IMR-90 (cell line): ENCODE measurements at regions of chr4 and their contacts with region 1.

Region 1: DNA sequence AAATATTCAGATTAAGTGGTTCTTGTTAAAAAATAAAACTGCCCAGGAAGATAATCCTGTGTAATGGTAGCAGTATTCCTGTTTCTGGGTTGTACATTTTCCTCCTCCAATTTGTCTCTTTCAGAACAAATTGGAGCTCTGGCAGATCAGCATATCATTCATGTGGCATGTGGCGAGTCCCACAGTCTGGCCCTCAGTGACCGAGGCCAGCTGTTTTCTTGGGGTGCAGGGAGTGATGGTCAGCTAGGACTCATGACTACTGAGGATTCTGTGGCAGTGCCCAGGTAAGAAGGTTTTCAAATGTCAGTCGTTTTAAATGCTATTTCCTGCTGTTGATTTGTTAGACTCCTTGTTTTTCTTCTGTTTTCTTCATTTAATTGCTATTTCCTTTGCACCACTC is 47.9 kb downstream of the NAP1L5 start:
- DNase-seq: no peak
- ATAC-seq: no peak
- H3K4me3 ChIP-seq: no peak overlapping the region
- H3K27ac ChIP-seq: no peak overlapping the region
- H3K4me1 ChIP-seq: no peaks in the 10 kb centered on the region; the same call in 1 of the 2 replicates
- H3K27me3 ChIP-seq: no peaks in the 10 kb centered on the region
- CTCF ChIP-seq: no peak
- POLR2A ChIP-seq: no peak
- RAD21 ChIP-seq: no peak

Region 2: DNA sequence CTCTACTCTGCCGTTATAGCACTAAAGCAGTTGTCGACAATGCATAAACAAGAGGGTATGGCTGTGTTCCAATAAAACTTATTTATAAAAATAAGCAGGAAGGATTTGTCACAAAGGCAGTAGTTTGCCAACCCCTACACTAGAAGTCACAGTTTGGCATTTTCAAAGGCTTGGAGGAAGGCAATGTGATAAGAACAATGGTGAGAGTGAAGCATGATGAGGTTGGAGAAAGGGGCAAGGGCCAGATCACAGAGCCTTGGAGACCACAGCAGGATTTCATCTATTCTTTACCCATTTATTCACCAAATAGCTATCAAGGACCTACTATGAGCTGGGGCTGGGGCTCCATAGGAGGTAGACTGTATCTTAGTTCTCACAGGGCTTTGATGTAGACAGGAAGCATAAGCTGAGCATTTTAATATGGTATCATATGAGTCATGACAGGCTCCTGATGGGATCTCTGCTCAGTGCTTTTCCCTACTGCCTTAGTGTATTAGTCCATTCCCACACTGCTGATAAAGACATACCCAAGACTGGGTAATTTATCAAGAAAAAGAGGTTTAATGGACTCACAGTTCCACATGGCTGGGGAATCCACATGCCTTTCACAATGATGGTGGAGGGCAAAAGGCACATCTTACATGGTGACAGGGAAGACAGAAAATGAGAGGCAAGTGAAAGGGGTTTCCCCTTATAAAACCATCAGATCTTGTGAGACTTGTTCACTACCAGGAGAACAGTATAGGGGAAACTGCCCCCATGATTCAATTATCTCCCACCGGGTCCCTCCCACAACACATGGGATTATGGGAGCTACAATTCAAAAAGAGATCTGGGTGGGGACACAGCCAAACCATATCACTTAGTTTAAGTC is 424.2 kb before region 1 on chr4:
- CTCF ChIA-PET with region 1: no interaction called
- POLR2A ChIA-PET with region 1: interaction called, 10 read pairs
- dilution Hi-C with region 1: no loop called
- in situ Hi-C with region 1: no loop called
- intact Hi-C with region 1: no loop called
- DNase-seq: peak; percentile 26
- ATAC-seq: peak; percentile 69
- H3K4me3 ChIP-seq: no peak overlapping the region
- H3K27ac ChIP-seq: no peak overlapping the region
- H3K4me1 ChIP-seq: 0 out of 2 replicates have a peak, but pooled peaks cover 2% of the 10 kb centered on the region
- H3K27me3 ChIP-seq: no peaks in the 10 kb centered on the region; the same call in 1 of the 2 replicates
- CTCF ChIP-seq: no peak
- POLR2A ChIP-seq: no peak
- RAD21 ChIP-seq: no peak

Region 3: GRCh38 chr4:89226665-89227574 is 577.2 kb after region 1 on chr4:
- CTCF ChIA-PET with region 1: no interaction called
- POLR2A ChIA-PET with region 1: no interaction called
- dilution Hi-C with region 1: no loop called
- in situ Hi-C with region 1: no loop called
- intact Hi-C with region 1: no loop called
- DNase-seq: peak; percentile 62
- ATAC-seq: peak; percentile 96
- H3K4me3 ChIP-seq: no peak overlapping the region
- H3K27ac ChIP-seq: no peak overlapping the region
- H3K4me1 ChIP-seq: no peaks in the 10 kb centered on the region
- H3K27me3 ChIP-seq: no peaks in the 10 kb centered on the region
- CTCF ChIP-seq: peak; percentile 65
- POLR2A ChIP-seq: no peak
- RAD21 ChIP-seq: peak; percentile 68